ENCODE measurements at regions of chr17 and their contacts with region 1.

Region 1: GRCh38 chr17:2336215-2336851 is at the start of gene TSR1:
- DNase-seq: peak; percentile 55
- ATAC-seq: peak; percentile 94
- H3K4me3 ChIP-seq: peak within 1 kb of the TSS; percentile 92
- H3K27ac ChIP-seq: peak within 1 kb of the TSS; percentile 86
- H3K4me1 ChIP-seq: peaks cover 5% of the 10 kb centered on the region
- H3K27me3 ChIP-seq: no peaks in the 10 kb centered on the region
- CTCF ChIP-seq: peak in 2 of 3 experiments; percentile 29 to 45; a peak in 2 of 6 replicates
- EP300 ChIP-seq: no peak
- POLR2A ChIP-seq: peak; percentile 94
- RAD21 ChIP-seq: no peak
- polyA plus RNA-seq, gene TSR1: 14.7 to 21.9 TPM

Region 2: DNA sequence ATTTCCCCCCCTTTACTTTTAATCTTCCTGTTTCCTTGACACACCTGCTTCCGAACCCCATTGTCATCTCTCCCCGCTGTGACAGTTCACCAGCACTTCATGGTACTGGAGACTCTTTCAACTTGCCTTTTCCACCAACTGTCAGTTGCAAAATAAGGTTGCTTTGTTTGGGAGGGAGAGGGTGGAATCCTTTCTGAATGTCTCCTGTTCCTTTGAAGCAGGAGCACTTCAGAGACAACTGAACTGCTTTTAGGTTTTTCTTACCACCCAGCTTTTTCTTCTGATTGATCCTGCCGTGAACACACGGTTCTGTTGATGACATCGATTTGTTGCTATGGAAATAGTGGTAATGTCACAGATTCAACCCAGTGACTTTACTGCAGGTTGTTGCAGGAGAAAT is 464.6 kb before region 1 on chr17:
- CTCF ChIA-PET with region 1: no interaction called
- POLR2A ChIA-PET with region 1: interaction called, 10 read pairs
- RAD21 ChIA-PET with region 1: no interaction called
- SMC1A ChIA-PET with region 1: no interaction called
- in situ Hi-C with region 1: no loop called
- intact Hi-C with region 1: no loop called
- DNase-seq: no peak
- ATAC-seq: no peak
- H3K4me3 ChIP-seq: no peak overlapping the region
- H3K27ac ChIP-seq: no peak overlapping the region
- H3K4me1 ChIP-seq: no peaks in the 10 kb centered on the region
- H3K27me3 ChIP-seq: no peaks in the 10 kb centered on the region
- CTCF ChIP-seq: no peak
- EP300 ChIP-seq: no peak
- POLR2A ChIP-seq: no peak
- RAD21 ChIP-seq: no peak

Region 3: DNA sequence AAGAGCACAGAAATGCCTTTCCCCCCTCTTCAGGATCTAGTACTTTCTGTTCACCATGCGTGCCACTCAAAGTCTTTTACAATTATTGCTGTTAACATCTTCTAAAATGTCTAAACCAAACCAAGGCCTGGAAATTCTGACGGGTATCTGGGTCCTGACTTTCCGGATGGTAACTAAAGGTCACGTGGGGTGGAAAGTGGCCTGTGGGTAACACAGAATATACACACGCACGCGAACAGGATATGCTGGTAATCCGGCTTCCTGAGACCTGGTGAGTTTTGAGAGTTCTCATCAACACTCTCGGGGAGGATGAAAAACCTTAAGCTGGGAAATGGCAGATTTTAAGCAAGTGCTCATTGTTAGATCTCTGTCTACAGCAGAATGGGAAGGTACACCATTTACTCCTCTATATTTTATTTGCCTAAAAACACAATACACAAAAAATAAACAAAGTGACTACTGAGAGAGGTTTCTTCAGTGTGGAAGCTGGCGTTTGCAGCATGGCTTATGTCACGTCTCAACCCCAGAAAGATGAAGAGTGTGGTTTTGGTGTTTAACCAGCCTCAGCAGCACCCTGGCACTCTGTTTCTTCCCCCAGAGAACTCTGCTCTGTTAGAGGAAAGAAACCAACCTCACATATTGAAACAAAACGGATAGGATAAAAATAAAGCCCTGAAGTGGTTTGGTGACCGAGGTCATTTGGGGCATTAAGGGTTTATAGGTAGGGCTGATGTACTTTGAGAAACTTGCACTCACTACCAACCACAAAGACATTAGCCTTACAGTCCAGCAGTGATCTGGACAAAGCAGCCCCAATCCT is 70.1 kb before region 1 on chr17:
- CTCF ChIA-PET with region 1: interaction called, 3 read pairs
- POLR2A ChIA-PET with region 1: no interaction called
- RAD21 ChIA-PET with region 1: no interaction called
- SMC1A ChIA-PET with region 1: interaction called, 3 read pairs
- in situ Hi-C with region 1: no loop called
- intact Hi-C with region 1: loop called (anchors 2 kb)
- DNase-seq: peak; percentile 97
- ATAC-seq: peak; percentile 90
- H3K4me3 ChIP-seq: peak overlapping the region; percentile 28; the same call in 1 of the 2 replicates
- H3K27ac ChIP-seq: peak overlapping the region; percentile 99
- H3K4me1 ChIP-seq: peaks cover 61% of the 10 kb centered on the region
- H3K27me3 ChIP-seq: no peaks in the 10 kb centered on the region
- CTCF ChIP-seq: no peak
- EP300 ChIP-seq: peak; percentile 58 to 87; a peak in 3 of 4 replicates
- POLR2A ChIP-seq: peak; percentile 64
- RAD21 ChIP-seq: peak; percentile 16; the same call in 1 of the 2 replicates

Region 4: GRCh38 chr17:2303204-2304188 is 32.8 kb before region 1 on chr17 and contains the starts of genes SMG6 and SRR:
- CTCF ChIA-PET with region 1: interaction called, 5 read pairs
- POLR2A ChIA-PET with region 1: interaction called, 12 read pairs
- RAD21 ChIA-PET with region 1: interaction called, 11 read pairs
- SMC1A ChIA-PET with region 1: interaction called, 6 read pairs
- in situ Hi-C with region 1: no loop called
- intact Hi-C with region 1: no loop called
- DNase-seq: peak; percentile 45
- ATAC-seq: peak; percentile 95
- H3K4me3 ChIP-seq: peak within 1 kb of the TSS; percentile 96
- H3K27ac ChIP-seq: peak within 1 kb of the TSS; percentile 89
- H3K4me1 ChIP-seq: no peaks in the 10 kb centered on the region
- H3K27me3 ChIP-seq: no peaks in the 10 kb centered on the region
- CTCF ChIP-seq: no peak
- EP300 ChIP-seq: no peak
- POLR2A ChIP-seq: peak; percentile 98
- RAD21 ChIP-seq: no peak
- polyA plus RNA-seq, gene SMG6: 0.58 to 0.64 TPM
- polyA plus RNA-seq, gene SRR: 21.1 to 33.9 TPM

Region 5: DNA sequence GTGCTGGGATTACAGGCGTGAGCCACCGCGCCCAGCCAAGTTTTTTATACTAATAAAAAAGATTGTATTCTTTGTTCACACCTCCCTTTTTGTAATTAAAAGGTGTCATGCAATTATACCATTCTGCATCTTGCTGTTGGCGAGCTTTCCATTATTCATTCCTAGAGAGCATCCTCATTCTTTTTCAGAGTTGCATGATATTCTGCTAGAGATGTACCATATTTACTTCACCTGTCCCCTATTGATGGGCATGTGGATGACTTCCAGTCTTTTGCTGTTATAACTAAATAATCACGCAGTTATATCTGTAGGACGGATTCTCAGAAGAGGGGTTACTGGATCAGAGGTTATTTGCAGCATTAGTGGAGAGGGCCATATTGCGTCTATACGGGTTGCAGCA is 18.0 kb after region 1 on chr17:
- CTCF ChIA-PET with region 1: interaction called, 13 read pairs
- POLR2A ChIA-PET with region 1: interaction called, 3 read pairs
- RAD21 ChIA-PET with region 1: interaction called, 3 read pairs
- SMC1A ChIA-PET with region 1: interaction called, 8 read pairs
- in situ Hi-C with region 1: no loop called
- intact Hi-C with region 1: no loop called
- DNase-seq: no peak
- ATAC-seq: no peak
- H3K4me3 ChIP-seq: no peak overlapping the region
- H3K27ac ChIP-seq: peak overlapping the region; percentile 53; the same call in 1 of the 2 replicates
- H3K4me1 ChIP-seq: peaks cover 13% of the 10 kb centered on the region
- H3K27me3 ChIP-seq: no peaks in the 10 kb centered on the region
- CTCF ChIP-seq: no peak
- EP300 ChIP-seq: no peak
- POLR2A ChIP-seq: no peak
- RAD21 ChIP-seq: no peak